ENCODE measurements at regions of chr3 and their contacts with region 1.

Region 1: DNA sequence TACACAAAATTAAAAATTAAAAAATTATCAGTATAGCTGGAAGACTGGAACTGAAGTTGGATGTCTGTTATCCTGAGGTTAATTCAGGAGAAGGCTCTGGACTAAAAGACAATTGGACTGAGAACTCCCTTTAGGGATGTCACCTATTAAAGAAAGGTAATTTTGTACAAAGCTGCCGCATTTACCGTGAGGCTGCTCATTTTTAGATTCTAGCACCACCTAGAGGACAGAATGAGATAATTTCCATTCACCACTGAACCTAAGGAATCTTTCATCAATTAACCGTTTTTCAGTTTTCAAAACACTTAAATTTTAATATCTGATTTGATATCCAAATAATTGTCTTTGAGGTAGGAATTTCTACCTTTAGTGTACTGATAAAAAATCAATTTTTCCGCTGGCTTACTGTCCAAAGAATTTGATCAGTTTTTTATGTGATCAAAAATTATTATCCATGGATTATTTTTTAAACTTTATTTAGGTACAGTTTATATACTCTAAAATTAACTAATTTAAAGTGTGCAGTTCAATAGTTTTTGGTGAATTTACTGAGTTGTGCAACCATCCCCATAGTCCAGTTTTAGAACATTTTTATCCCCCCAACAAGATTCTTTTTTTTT is 106.7 kb upstream of the TNIK start:
- DNase-seq: peak; percentile 56
- H3K4me3 Mint-ChIP-seq: no peak overlapping the region
- H3K27ac Mint-ChIP-seq: no peak overlapping the region
- H3K4me1 Mint-ChIP-seq: no peaks in the 10 kb centered on the region
- H3K27me3 Mint-ChIP-seq: no peaks in the 10 kb centered on the region
- CTCF ChIP-seq: peak; percentile 69

Region 2: GRCh38 chr3:170961616-170962400 is 605.1 kb before region 1 on chr3:
- CTCF ChIA-PET with region 1: interaction called, 41 read pairs
- POLR2A ChIA-PET with region 1: no interaction called
- intact Hi-C with region 1: loop called (anchors 1 kb)
- DNase-seq: peak; percentile 45
- H3K4me3 Mint-ChIP-seq: no peak overlapping the region
- H3K27ac Mint-ChIP-seq: no peak overlapping the region
- H3K4me1 Mint-ChIP-seq: no peaks in the 10 kb centered on the region
- H3K27me3 Mint-ChIP-seq: no peaks in the 10 kb centered on the region
- CTCF ChIP-seq: peak; percentile 76

Region 3: GRCh38 chr3:171049861-171050444 is 517.0 kb before region 1 on chr3:
- CTCF ChIA-PET with region 1: interaction called, 26 read pairs
- POLR2A ChIA-PET with region 1: interaction called, 4 read pairs
- intact Hi-C with region 1: loop called (anchors 1 kb)
- DNase-seq: peak; percentile 77
- H3K4me3 Mint-ChIP-seq: no peak overlapping the region
- H3K27ac Mint-ChIP-seq: peak overlapping the region; percentile 11
- H3K4me1 Mint-ChIP-seq: peaks cover 8% of the 10 kb centered on the region
- H3K27me3 Mint-ChIP-seq: no peaks in the 10 kb centered on the region
- CTCF ChIP-seq: peak; percentile 79

Region 4: GRCh38 chr3:171162986-171163723 is 403.8 kb before region 1 on chr3:
- CTCF ChIA-PET with region 1: interaction called, 8 read pairs
- POLR2A ChIA-PET with region 1: no interaction called
- intact Hi-C with region 1: loop called (anchors 1 kb)
- DNase-seq: peak; percentile 46
- H3K4me3 Mint-ChIP-seq: no peak overlapping the region
- H3K27ac Mint-ChIP-seq: no peak overlapping the region
- H3K4me1 Mint-ChIP-seq: peaks cover 10% of the 10 kb centered on the region
- H3K27me3 Mint-ChIP-seq: no peaks in the 10 kb centered on the region
- CTCF ChIP-seq: peak; percentile 51

Region 5: DNA sequence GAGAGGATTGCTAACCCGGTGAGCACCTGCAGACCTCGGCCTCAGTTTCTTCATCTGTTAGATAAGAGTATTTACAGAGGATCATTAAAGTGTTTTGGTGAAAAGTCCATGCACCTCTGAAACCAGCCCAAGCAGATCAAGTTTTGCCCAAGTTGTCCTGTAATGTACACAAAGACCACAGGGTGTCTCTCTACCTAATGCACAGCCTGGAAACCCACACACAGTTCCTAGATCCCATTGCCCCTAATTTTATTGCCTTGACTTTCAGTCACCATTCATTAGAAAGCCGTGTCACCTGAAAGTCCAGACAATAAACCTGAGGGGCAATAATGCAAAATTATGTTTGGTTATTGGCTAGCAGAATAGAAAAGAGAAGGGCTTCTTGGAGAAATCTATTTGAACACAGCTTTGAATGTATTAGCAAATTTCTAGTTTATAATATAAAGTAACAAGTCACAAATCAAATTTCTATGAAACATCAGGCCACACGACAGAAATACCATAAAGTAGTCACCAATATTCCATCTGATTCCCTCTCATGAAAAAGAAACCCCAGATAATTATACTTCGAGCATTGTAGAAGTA is 379.1 kb before region 1 on chr3:
- CTCF ChIA-PET with region 1: interaction called, 64 read pairs
- POLR2A ChIA-PET with region 1: interaction called, 3 read pairs
- intact Hi-C with region 1: loop called (anchors 1 kb)
- DNase-seq: peak; percentile 60
- H3K4me3 Mint-ChIP-seq: no peak overlapping the region
- H3K27ac Mint-ChIP-seq: no peak overlapping the region
- H3K4me1 Mint-ChIP-seq: peaks cover 22% of the 10 kb centered on the region
- H3K27me3 Mint-ChIP-seq: no peaks in the 10 kb centered on the region
- CTCF ChIP-seq: peak; percentile 70

Region 6: DNA sequence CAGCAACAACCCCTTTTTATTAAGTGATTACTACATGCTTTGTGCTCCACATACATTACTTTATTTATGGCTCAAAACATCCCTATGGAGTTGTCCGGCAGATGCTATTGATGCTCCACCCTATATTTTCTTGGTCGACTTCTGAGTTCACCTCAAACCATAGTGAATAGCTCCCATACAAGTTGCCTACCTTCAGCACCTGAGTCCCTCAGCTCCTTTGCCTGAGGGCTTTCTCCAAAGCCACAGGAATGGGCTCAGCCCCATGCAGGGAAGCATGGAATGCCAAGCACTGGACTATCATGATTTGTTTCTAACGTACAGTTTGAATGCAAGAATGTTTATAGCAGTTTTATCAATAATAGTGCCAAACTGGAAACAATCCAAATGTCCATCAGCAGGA is 18.1 kb after region 1 on chr3:
- CTCF ChIA-PET with region 1: interaction called, 12 read pairs
- POLR2A ChIA-PET with region 1: no interaction called
- intact Hi-C with region 1: no loop called
- DNase-seq: peak; percentile 36
- H3K4me3 Mint-ChIP-seq: no peak overlapping the region
- H3K27ac Mint-ChIP-seq: no peak overlapping the region
- H3K4me1 Mint-ChIP-seq: peaks cover 5% of the 10 kb centered on the region
- H3K27me3 Mint-ChIP-seq: no peaks in the 10 kb centered on the region
- CTCF ChIP-seq: no peak